ENCODE measurements at regions of chr12 and their contacts with region 1.

Region 1: GRCh38 chr12:89019408-89020120 is 332.7 kb downstream of the DUSP6 start:
- DNase-seq: peak; percentile 98
- H3K4me3 ChIP-seq: peak overlapping the region; percentile 39
- H3K27ac ChIP-seq: peak overlapping the region; percentile 66
- H3K4me1 ChIP-seq: peaks cover 26% of the 10 kb centered on the region
- H3K27me3 ChIP-seq: no peaks in the 10 kb centered on the region
- CTCF ChIP-seq: peak; percentile 98

Region 2: GRCh38 chr12:89179983-89180382 is 160.4 kb after region 1 on chr12:
- CTCF ChIA-PET with region 1: no interaction called
- POLR2A ChIA-PET with region 1: no interaction called
- intact Hi-C with region 1: no loop called
- DNase-seq: peak; percentile 87
- H3K4me3 ChIP-seq: no peak overlapping the region
- H3K27ac ChIP-seq: no peak overlapping the region
- H3K4me1 ChIP-seq: peaks cover 33% of the 10 kb centered on the region
- H3K27me3 ChIP-seq: no peaks in the 10 kb centered on the region
- CTCF ChIP-seq: no peak

Region 3: DNA sequence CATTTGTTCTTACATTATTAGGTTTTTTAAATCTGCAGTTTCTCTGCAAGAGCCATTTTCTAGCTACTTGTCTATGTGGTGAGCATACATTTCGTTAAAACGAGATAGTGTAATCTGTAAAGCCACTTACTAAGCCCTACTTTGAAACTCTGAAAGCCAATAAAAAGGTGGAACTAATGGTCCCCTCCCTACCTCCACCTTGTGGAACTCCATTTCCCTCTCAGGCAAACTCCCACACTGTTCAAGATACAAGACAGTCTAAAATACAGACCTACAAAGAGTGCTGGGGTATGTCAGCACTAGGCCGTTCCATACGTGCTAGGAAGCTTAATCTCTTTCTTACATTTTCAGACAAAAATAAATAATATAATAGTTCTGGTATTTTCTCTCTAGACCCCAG is 258.6 kb after region 1 on chr12:
- CTCF ChIA-PET with region 1: no interaction called
- POLR2A ChIA-PET with region 1: no interaction called
- intact Hi-C with region 1: loop called (anchors 5 kb)
- DNase-seq: no peak
- H3K4me3 ChIP-seq: no peak overlapping the region
- H3K27ac ChIP-seq: peak overlapping the region; percentile 84
- H3K4me1 ChIP-seq: peaks cover 58% of the 10 kb centered on the region
- H3K27me3 ChIP-seq: no peaks in the 10 kb centered on the region
- CTCF ChIP-seq: peak; percentile 45

Region 4: GRCh38 chr12:89352492-89353187 is 333.1 kb after region 1 on chr12 and contains the start of gene DUSP6:
- CTCF ChIA-PET with region 1: interaction called, 5 read pairs
- POLR2A ChIA-PET with region 1: no interaction called
- intact Hi-C with region 1: loop called (anchors 1 kb)
- DNase-seq: peak; percentile 100
- H3K4me3 ChIP-seq: peak within 1 kb of the TSS; percentile 68
- H3K27ac ChIP-seq: peak within 1 kb of the TSS; percentile 99
- H3K4me1 ChIP-seq: peaks cover 29% of the 10 kb centered on the region
- H3K27me3 ChIP-seq: no peaks in the 10 kb centered on the region
- CTCF ChIP-seq: no peak
- total RNA-seq, gene DUSP6: 207 and 226 TPM in 2 replicates

Region 5: DNA sequence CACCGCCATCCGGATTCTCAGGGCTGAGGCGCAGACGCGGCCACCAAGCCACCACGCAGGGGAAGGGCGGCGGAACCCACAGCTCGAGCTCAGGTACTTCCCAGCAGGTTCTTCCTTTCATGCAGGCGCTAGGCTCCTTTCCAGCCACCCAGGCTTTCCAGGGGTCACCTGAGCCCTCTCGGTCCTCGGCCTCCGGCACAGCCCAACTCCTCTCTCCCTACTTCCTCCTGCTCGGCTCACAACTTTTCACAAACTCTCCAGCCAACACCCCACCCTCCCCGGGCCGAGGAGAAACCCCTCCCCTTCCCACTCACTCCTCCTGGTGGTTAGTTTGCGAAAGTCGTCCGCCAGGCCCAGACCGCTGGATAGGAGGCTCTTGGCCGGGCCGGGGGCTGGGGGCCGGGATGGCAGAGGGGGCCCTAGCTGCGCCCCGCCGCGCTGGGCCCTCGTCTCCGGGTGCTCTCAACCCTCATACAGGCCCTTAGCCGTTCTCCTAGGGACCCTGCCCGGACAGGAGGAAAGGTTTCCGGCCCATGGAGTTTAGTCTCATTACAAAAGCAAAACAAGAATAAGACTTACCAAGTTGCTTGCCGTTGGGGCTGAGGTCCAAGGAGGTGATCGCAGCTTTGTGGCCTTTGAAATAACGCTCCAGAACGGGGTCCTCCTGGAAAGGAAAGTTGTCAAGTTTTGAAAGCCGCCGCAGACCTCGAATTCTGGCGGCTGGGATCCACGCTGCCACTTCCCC is 505.1 kb after region 1 on chr12 and contains the start of gene GALNT4:
- CTCF ChIA-PET with region 1: interaction called, 10 read pairs
- POLR2A ChIA-PET with region 1: no interaction called
- intact Hi-C with region 1: loop called (anchors 1 kb)
- DNase-seq: peak; percentile 94
- H3K4me3 ChIP-seq: peak within 1 kb of the TSS; percentile 82
- H3K27ac ChIP-seq: peak within 1 kb of the TSS; percentile 86
- H3K4me1 ChIP-seq: peaks cover 35% of the 10 kb centered on the region
- H3K27me3 ChIP-seq: no peaks in the 10 kb centered on the region
- CTCF ChIP-seq: peak; percentile 83
- total RNA-seq, gene GALNT4: 13.2 and 14.3 TPM in 2 replicates